ENCODE measurements at regions of chr22 and their contacts with region 1.

Region 1: GRCh38 chr22:24845041-24845898 is 39.3 kb downstream of the SGSM1 start:
- DNase-seq: no peak
- ATAC-seq: peak; percentile 34
- H3K4me3 Mint-ChIP-seq: no peak overlapping the region
- H3K27ac Mint-ChIP-seq: no peak overlapping the region
- H3K4me1 Mint-ChIP-seq: peaks cover 8% of the 10 kb centered on the region
- H3K27me3 Mint-ChIP-seq: no peaks in the 10 kb centered on the region
- CTCF ChIP-seq: no peak

Region 2: GRCh38 chr22:24727218-24727851 is 117.9 kb before region 1 on chr22:
- CTCF ChIA-PET with region 1: no interaction called
- POLR2A ChIA-PET with region 1: no interaction called
- intact Hi-C with region 1: no loop called
- DNase-seq: no peak
- ATAC-seq: no peak
- H3K4me3 Mint-ChIP-seq: no peak overlapping the region
- H3K27ac Mint-ChIP-seq: no peak overlapping the region
- H3K4me1 Mint-ChIP-seq: no peaks in the 10 kb centered on the region
- H3K27me3 Mint-ChIP-seq: peaks cover 17% of the 10 kb centered on the region
- CTCF ChIP-seq: no peak

Region 3: GRCh38 chr22:24758164-24758799 is 87.0 kb before region 1 on chr22:
- CTCF ChIA-PET with region 1: interaction called, 14 read pairs
- POLR2A ChIA-PET with region 1: no interaction called
- intact Hi-C with region 1: no loop called
- DNase-seq: peak; percentile 78
- ATAC-seq: no peak
- H3K4me3 Mint-ChIP-seq: no peak overlapping the region
- H3K27ac Mint-ChIP-seq: no peak overlapping the region
- H3K4me1 Mint-ChIP-seq: no peaks in the 10 kb centered on the region
- H3K27me3 Mint-ChIP-seq: no peaks in the 10 kb centered on the region
- CTCF ChIP-seq: peak; percentile 91

Region 4: DNA sequence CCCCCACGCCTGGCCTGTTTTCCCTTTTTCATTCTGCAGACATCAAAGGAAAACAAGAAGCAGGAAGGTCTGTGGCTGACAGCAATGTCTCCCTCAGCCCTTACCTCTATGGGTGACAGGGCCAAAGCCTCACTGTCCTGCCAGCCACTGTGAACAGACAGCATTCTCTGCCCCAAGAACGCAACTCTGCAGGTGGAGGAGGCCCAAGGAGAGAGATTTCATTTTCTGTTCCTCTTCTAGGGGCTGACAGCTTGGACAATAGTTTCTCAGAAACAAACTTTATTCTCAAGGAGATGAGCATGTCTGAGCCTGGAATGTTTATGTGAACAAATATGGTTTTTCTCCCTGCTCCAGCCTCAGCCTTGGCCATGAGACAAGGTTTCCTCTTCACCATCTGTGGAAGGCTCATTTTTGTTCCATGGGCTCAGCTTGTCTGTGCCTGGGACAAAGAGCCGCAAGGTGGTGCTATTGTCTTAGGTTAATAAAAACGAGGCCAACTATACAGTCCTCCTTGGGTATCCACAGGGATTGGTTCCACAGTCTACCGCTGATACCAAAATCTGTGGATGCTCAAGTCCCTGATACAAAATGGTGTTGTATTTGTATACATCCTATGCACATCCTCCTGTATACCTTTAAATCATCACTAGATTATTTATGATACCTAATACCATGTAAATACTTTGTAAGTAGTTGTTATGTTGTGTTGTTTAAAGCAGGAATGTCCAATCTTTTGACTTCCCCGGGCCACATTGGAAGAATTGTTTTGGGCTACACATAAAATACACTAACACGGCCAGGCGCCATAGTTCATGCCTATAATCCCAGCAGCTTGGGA is 76.5 kb before region 1 on chr22:
- CTCF ChIA-PET with region 1: interaction called, 40 read pairs
- POLR2A ChIA-PET with region 1: interaction called, 3 read pairs
- intact Hi-C with region 1: loop called (anchors 5 kb)
- DNase-seq: peak; percentile 67
- ATAC-seq: peak; percentile 56
- H3K4me3 Mint-ChIP-seq: no peak overlapping the region
- H3K27ac Mint-ChIP-seq: no peak overlapping the region
- H3K4me1 Mint-ChIP-seq: no peaks in the 10 kb centered on the region
- H3K27me3 Mint-ChIP-seq: peaks cover 5% of the 10 kb centered on the region
- CTCF ChIP-seq: peak; percentile 47

Region 5: DNA sequence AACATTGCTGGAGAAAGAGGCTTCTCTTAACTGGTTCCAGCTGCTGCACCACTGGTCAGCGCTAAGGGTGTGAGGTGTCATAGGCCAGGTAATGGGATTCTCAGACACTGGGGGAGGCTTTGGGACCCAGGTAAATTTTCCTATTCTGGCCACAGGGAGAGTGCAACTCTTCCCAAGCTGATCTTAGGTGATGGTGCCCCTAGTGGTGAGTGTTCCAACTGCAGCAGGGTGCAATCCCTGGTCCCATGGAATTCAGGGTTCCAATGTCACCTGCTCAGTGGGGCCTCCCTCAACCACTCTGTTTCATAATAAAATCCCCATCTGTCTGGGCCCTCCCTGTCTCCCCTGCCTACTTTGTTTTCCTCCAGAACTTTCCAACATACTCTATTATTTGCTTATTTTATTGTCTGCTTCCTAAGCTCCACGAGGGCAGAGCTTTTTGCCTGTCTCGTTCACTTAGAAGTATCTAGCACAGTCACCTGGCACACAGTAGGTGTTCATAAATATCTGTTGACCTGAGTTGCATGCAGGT is 42.2 kb before region 1 on chr22:
- CTCF ChIA-PET with region 1: interaction called, 13 read pairs
- POLR2A ChIA-PET with region 1: interaction called, 5 read pairs
- intact Hi-C with region 1: no loop called
- DNase-seq: peak; percentile 69
- ATAC-seq: no peak
- H3K4me3 Mint-ChIP-seq: no peak overlapping the region
- H3K27ac Mint-ChIP-seq: no peak overlapping the region
- H3K4me1 Mint-ChIP-seq: peaks cover 7% of the 10 kb centered on the region
- H3K27me3 Mint-ChIP-seq: peaks cover 3% of the 10 kb centered on the region
- CTCF ChIP-seq: peak; percentile 97

Region 6: DNA sequence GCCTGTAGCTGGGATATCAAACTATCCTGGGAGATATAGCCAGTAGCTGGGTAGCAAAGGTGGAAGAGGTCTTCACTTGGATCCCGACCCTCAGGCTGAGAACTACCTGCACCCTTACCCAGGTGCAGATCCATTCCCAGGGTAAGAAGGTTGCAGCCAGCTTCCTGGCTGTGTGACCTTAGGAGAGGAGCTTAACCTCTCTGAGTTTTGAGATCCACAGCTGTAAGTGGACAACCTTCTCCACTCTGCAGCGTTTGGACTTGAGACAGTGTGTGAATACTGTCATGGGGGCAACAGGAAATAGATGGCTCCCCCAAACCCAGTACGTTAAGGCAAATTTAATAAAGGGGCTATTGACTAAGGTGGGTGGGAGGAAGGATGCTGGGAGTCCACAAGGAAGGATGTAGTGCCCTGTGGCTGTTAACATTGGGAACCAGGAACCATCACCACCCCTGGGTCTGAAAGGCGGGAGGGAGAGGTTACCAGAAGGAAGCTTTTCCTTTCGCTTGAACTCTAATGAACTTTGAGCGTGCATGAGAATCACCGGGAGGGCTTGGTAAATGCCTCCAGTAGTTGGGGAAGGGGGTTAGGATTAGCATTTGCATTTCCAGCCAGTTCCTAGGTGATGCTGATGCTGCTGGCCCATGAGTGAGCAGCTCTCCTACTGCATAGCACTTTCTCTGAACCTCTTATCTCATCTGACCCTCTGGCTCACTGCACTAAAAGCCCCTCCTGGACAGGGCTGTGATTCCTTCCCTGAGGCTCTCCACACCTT is 14.9 kb before region 1 on chr22:
- CTCF ChIA-PET with region 1: interaction called, 13 read pairs
- POLR2A ChIA-PET with region 1: no interaction called
- intact Hi-C with region 1: no loop called
- DNase-seq: no peak
- ATAC-seq: no peak
- H3K4me3 Mint-ChIP-seq: no peak overlapping the region
- H3K27ac Mint-ChIP-seq: no peak overlapping the region
- H3K4me1 Mint-ChIP-seq: no peaks in the 10 kb centered on the region
- H3K27me3 Mint-ChIP-seq: peaks cover 1% of the 10 kb centered on the region
- CTCF ChIP-seq: no peak

Region 7: GRCh38 chr22:25054943-25055511 is 209.8 kb after region 1 on chr22:
- CTCF ChIA-PET with region 1: no interaction called
- POLR2A ChIA-PET with region 1: no interaction called
- intact Hi-C with region 1: no loop called
- DNase-seq: peak; percentile 88
- ATAC-seq: peak; percentile 74
- H3K4me3 Mint-ChIP-seq: no peak overlapping the region
- H3K27ac Mint-ChIP-seq: peak overlapping the region; percentile 59
- H3K4me1 Mint-ChIP-seq: peaks cover 41% of the 10 kb centered on the region
- H3K27me3 Mint-ChIP-seq: no peaks in the 10 kb centered on the region
- CTCF ChIP-seq: no peak

Region 8: GRCh38 chr22:25281675-25282345 is 436.5 kb after region 1 on chr22:
- CTCF ChIA-PET with region 1: no interaction called
- POLR2A ChIA-PET with region 1: no interaction called
- intact Hi-C with region 1: no loop called
- DNase-seq: no peak
- ATAC-seq: no peak
- H3K4me3 Mint-ChIP-seq: no peak overlapping the region
- H3K27ac Mint-ChIP-seq: no peak overlapping the region
- H3K4me1 Mint-ChIP-seq: peaks cover 15% of the 10 kb centered on the region
- H3K27me3 Mint-ChIP-seq: peaks cover 53% of the 10 kb centered on the region
- CTCF ChIP-seq: no peak

Measured in activated CD8-positive, alpha-beta T cell treated with anti-CD3 and anti-CD28 coated beads for 36 hours (primary cell).